ENCODE measurements at regions of chr1 and their contacts with region 1.

Region 1: GRCh38 chr1:234621657-234622335 is 11.8 kb upstream of the IRF2BP2 start:
- DNase-seq: no peak
- ATAC-seq: no peak
- H3K4me3 ChIP-seq: no peak overlapping the region
- H3K27ac ChIP-seq: no peak overlapping the region
- H3K4me1 ChIP-seq: peaks cover 5 to 12% of the 10 kb centered on the region in 2 donors
- H3K27me3 ChIP-seq: no peaks in the 10 kb centered on the region

Region 2: DNA sequence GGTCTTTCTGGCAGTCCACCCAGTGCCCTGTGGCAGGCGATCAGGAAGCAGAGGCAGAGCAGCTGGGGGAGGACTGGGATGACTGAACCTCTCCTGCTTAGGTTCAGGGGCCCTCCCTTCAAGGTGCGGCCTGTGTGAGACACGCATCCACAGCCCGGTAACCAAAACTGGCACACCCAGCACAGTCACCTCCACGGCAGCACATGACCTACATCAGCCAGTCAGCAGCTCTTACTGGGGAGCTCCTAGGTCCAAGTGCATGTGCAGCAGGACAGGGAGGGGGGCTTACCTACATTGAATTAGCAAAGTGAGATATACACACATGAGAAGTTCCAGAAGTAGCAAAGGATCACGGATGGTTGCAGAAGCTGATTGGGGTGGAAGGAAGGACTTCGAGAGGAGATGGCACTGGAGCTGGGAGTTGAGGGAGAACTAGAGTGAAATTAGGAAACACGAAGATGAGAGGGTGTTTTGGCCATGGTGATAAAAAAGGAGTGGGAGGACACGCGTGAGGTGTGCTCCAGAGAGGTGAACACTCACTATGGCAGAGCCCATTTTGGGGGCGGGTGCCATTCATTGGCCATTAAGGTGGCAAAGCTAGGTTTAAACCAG is 39.6 kb after region 1 on chr1:
- intact Hi-C with region 1: loop called in 1 of 2 experiments (anchors 5 kb)
- DNase-seq: no peak
- ATAC-seq: no peak
- H3K4me3 ChIP-seq: no peak overlapping the region
- H3K27ac ChIP-seq: no peak overlapping the region
- H3K4me1 ChIP-seq: no peaks in the 10 kb centered on the region
- H3K27me3 ChIP-seq: no peaks in the 10 kb centered on the region

Region 3: DNA sequence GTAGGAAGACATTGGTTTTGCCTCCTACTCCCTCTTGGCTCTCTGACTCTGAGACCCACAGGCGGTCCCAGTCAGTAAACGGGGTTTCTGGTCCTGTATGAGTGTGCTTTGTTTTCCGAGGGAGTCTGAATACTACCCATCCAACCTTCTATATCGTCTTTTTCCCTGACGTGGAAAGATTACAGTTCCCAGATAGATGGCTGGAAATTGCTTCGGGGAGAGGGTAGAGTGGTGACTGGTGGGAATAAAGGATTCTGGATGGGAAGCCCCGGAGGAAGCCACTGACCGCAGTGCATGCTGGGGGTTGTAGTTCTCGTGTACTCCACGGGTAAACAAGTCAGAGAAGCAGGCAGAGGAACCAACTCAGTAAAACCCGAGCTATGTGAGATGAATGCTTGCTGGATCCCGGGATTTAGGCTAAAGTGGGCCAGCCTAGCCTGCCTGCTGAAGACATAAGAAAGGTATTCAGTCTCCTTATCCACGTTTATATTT is 54.4 kb after region 1 on chr1:
- intact Hi-C with region 1: loop called in 1 of 2 experiments (anchors 5 kb)
- DNase-seq: peak; percentile 92 to 94
- ATAC-seq: peak; percentile 89
- H3K4me3 ChIP-seq: peak overlapping the region; percentile 6 to 85
- H3K27ac ChIP-seq: peak overlapping the region in 1 of 2 donors; percentile 56
- H3K4me1 ChIP-seq: no peaks in the 10 kb centered on the region
- H3K27me3 ChIP-seq: no peaks in the 10 kb centered on the region

Measured in aorta (tissue), 5 donors.